Posterior vena cava (tissue), 2 donors: ENCODE measurements at regions of chr1 and their contacts with region 1.

Region 1: DNA sequence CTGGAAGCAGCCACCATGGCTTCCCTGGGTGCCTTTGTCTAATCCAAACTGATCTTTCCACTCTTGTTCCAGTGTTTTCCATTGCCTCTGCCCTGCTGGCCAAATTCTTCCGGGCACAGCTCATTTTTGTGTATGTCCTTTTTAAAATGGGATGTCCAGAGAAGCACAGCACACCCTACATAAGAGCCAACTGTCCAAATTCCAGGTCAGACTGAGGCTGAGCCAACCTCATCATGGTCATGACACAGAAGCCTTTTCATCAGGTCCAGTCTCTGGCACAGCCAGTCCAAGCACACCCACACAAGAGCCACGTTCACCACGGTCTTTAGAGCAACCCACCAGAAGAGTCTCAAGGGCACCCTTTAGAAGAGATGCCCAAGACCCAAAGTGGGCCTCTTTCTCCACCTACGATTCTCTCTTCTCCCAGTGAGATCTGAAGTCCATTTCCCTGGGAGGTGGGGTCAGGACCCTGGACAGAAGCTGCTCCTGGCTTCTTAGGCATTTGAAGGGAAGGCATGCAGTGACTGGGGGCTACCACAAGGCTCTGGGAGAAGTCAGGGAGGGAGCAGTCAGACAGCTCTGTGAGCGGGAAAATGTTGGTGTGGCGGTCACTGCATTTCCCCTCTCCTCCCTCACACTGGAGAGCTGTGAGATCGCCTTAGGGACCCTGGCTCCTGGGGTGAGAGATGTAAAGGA is 53.2 kb downstream of the SYT2 start:
- DNase-seq: no peak

Region 2: DNA sequence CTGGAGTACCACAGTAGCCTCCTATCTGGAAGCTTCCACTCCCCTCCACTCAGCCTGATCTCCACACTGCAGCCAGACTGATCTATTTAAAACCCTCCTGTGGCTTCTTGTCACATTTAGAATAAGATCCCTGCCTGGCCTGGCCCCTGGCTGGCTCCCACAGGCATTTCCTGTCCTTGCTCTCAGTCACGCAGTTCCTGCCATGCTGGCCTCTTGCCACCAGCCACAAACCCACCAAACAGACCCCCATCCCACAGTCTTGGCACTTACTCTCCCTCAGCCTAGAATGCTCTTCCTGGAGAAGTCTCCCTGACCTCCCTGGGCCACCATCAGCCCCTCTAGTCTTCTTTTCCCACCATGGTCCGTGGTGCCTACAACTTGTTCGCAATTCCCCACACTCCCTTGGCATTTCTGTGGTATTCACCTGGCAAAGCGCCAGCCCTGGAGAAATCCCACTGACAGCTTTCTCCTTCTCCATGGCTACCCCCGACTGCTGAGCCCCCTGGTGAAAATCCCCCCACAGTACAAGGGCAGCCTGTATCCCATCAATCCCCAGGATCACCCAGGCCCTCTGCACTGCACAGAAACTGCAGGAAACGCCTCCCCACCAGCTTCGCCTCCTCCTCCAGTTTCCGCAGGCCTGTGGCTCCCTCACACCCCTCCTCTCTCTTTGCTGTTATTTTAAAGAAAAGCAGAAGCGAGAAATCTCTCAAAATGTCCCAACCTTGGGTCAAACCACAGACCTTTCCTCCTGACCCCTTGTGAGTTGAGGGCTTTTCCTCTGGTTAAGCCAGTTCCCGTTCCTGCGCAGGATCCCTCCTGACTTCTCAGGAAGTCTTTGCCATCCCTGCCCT is 41.4 kb before region 1 on chr1:
- intact Hi-C with region 1: loop called in 1 of 2 experiments (anchors 1 kb)
- DNase-seq: peak; percentile 83

Region 3: GRCh38 chr1:202639500-202639899 is 17.6 kb before region 1 on chr1:
- intact Hi-C with region 1: loop called in 1 of 2 experiments (anchors 1 kb)
- DNase-seq: no peak

Region 4: DNA sequence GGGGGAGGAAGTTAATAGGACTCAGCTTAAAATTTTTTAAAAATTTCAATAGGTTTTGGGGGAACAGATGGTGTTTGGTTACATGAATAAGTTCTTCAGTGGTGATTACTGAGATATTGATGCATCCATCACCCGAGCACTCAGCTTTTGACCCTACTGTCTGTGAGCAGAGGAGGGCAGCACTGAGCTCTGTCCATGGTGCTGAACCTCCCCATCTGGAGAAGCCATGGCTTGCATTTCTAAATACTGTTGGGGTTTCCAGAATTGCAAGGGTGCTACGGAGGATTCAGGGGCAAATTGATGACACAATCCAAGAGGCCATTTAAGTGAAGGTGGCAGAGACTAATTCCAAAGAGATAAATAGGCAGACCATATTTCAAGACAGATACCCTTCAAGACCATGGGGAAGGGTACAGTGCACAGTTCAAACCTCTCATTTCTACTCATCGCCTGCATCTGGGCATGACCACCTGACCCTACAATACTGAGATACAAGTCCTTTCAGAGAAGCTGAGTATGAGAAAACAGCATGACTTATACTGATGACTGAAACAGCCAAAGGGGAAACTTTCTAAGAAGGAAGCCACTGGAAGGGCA is 36.0 kb after region 1 on chr1:
- intact Hi-C with region 1: no loop called
- DNase-seq: peak; percentile 84